AG04449 (cell line): ENCODE measurements at regions of chr15 and their contacts with region 1.

Region 1: DNA sequence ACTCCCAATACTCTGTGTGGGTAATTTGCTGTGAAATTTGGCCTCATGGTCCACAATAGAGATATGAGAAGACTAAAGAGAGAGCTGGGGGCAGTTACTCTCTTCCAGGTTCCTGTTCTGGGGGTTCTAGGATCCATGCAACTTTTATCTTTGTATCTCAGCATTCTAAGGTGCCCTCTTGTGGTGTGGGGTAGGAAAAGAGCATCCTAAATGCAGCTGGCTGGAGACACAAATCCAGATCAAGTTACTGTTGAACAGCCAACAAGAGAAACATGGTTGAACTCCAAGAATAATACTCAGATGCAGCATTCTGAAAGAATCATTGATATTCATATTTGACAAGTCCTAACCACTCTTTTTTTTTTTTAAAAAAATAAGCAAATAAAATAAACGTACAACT is 238.2 kb downstream of the GREM1 start:
- DNase-seq: peak; percentile 83
- H3K4me3 ChIP-seq: no peak overlapping the region
- CTCF ChIP-seq: peak; percentile 69

Region 2: DNA sequence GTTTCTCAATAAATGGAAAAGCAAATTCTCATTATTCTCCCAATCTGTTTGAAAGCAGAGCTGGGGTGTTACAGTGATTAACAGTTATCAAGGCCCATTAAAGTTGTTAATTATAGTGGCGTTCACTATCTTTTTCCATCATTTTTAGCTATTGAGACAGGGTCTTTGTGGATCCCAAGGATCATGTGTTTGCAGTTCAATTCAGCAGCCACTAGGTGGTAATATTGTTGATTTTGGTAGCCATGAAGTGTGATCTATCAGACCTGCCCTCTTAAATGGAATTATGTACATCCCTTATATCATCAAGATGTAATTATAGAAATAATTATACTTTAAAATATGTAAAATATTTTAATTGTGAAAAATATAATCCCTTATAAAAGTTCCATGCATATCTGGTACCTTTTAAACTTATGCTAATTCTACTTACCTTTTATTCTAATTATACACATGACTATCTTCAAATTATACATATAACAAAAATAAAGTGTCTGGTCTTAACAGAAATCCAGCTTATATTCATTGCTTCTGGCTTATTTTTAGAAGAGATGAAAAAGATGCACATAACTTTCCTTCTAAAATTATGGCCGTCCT is 111.8 kb before region 1 on chr15:
- CTCF ChIA-PET with region 1: interaction called, 95 read pairs
- POLR2A ChIA-PET with region 1: interaction called, 10 read pairs
- DNase-seq: no peak
- H3K4me3 ChIP-seq: no peak overlapping the region
- CTCF ChIP-seq: peak; percentile 48

Region 3: DNA sequence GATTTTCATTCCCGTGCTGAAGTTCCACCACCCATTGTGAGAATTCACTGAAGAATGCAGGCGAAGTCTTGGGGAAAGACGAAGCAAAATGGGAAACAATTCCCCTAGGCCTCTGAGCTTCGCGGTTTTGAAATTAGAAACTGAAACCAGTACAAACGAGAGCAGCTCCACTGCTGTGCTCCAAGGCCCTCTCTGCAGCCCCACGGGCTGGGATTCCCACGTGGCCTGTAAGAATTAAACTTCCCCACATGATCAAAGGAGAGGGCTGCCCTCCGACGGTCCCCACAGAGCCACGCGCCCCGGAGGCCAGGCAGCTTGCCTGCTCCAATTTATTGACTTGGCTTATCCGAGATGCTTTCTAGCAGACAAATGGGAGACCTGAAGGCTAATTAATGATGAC is 94.2 kb before region 1 on chr15:
- CTCF ChIA-PET with region 1: interaction called, 10 read pairs
- POLR2A ChIA-PET with region 1: no interaction called
- DNase-seq: peak; percentile 70
- H3K4me3 ChIP-seq: peak overlapping the region; percentile 7
- CTCF ChIP-seq: no peak

Region 4: DNA sequence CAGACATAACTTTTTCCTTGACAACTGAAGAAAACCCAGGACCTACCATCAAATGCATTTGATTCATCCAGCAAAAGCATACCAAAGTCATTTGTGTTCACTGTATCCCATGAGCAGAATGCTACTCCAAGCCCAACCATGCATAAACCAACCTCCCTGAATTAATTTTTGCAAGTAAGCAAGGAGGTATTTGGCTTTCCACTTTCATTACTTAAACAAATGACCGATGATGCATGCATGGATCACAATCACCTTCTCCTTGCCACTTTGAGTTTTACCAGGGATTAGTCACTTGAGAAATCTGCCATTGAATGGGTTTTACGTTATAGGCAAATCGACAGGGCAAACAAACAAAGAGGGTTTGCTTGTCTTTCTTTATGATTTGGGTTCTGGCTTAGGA is 23.7 kb after region 1 on chr15:
- CTCF ChIA-PET with region 1: interaction called, 11 read pairs
- POLR2A ChIA-PET with region 1: interaction called, 3 read pairs
- DNase-seq: peak; percentile 95
- H3K4me3 ChIP-seq: peak overlapping the region; percentile 23
- CTCF ChIP-seq: no peak

Region 5: DNA sequence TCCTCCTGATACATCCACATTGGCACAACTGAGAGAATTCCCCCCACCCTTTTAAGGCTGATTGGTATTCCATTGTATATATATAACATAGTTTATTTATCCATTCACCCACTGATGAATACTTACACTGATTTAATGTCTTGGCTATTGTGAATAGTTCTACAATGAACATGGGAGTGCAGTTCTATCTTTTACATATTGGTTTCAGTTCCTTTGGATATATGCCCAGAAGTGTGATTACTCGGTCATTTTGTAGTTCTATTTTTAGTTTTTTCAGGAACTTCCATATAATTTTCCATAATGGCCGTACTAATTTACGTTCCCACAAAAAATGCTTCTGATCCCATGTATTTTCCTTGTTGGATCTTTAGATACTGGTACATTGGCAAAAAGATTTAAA is 103.2 kb after region 1 on chr15:
- CTCF ChIA-PET with region 1: no interaction called
- POLR2A ChIA-PET with region 1: no interaction called
- DNase-seq: peak; percentile 19
- H3K4me3 ChIP-seq: no peak overlapping the region
- CTCF ChIP-seq: no peak